T-cell (primary cell): ENCODE measurements at regions of chr16 and their contacts with region 1.

Region 1: DNA sequence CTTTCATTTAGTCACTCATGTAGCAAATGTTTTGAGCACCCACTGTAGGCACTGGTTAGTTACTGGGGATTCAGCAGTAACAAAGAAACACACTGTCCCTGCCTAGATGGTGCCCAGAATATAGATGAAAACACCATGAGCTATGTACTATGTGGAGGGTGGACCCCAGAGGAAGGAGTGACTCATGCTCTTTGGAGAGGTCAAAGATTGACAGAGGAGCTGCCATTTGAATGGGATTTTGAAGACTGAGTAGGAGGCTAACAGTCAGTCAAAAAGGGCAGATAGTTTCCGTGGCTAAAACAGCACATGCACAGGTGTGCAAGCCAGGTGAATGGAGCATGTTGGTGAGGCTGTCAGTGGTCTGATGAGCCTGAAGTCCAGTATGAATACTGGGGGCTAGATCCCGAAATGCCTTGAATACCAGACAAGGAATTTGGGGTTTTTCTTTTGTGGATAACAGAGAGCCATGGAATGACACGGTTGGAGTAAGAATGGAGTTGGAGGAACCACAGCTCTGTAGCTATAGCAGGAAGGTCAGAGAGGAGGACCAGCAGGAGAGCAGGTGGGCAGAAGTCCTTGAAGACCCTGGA is 6.1 kb downstream of the IL21R start:
- DNase-seq: peak in 2 of 35 experiments; percentile 34 to 53
- ATAC-seq: peak; percentile 36 to 57 (median 48)
- H3K4me3 ChIP-seq: peak overlapping the region in 1 of 2 donors; percentile 5
- H3K4me3 Mint-ChIP-seq: peak overlapping the region; percentile 58 to 92 (median 88)
- H3K27ac ChIP-seq: peak overlapping the region; percentile 73
- H3K27ac Mint-ChIP-seq: peak overlapping the region; percentile 87 to 93
- H3K4me1 ChIP-seq: peaks cover 27 to 60% of the 10 kb centered on the region in 2 experiments
- H3K4me1 Mint-ChIP-seq: peaks cover 88 to 93% (median 91%) of the 10 kb centered on the region in 3 donors
- H3K27me3 ChIP-seq: no peaks in the 10 kb centered on the region
- H3K27me3 Mint-ChIP-seq: no peaks in the 10 kb centered on the region

Region 2: GRCh38 chr16:27436921-27437650 is 29.0 kb after region 1 on chr16:
- CTCF ChIA-PET with region 1: no interaction called
- POLR2A ChIA-PET with region 1: interaction called in 1 of 2 experiments, 11 read pairs
- DNase-seq: peak in 2 of 35 experiments; percentile 12 to 13
- ATAC-seq: no peak
- H3K4me3 ChIP-seq: no peak overlapping the region
- H3K4me3 Mint-ChIP-seq: no peak overlapping the region
- H3K27ac ChIP-seq: no peak overlapping the region
- H3K27ac Mint-ChIP-seq: peak overlapping the region in 1 of 2 donors; percentile 86
- H3K4me1 ChIP-seq: peaks cover under 1 to 33% of the 10 kb centered on the region in 2 experiments
- H3K4me1 Mint-ChIP-seq: peaks cover 13 to 21% (median 18%) of the 10 kb centered on the region in 3 donors
- H3K27me3 ChIP-seq: no peaks in the 10 kb centered on the region
- H3K27me3 Mint-ChIP-seq: no peaks in the 10 kb centered on the region

Region 3: DNA sequence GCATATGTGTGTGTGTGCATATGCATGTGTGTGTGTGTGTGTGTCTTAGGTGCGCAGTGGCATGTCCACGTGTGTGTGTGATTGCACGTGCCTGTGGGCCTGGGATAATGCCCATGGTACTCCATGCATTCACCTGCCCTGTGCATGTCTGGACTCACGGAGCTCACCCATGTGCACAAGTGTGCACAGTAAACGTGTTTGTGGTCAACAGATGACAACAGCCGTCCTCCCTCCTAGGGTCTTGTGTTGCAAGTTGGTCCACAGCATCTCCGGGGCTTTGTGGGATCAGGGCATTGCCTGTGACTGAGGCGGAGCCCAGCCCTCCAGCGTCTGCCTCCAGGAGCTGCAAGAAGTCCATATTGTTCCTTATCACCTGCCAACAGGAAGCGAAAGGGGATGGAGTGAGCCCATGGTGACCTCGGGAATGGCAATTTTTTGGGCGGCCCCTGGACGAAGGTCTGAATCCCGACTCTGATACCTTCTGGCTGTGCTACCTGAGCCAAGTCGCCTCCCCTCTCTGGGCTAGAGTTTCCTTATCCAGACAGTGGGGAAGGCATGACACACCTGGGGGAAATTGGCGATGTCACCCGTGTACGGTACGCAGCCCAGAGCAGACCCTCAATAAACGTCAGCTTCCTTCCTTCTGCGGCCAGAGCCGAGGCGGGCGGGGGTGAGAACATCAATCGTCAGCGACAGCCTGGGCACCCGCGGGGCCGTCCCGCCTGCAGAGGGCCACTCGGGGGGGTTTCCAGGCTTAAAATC is 41.5 kb after region 1 on chr16:
- CTCF ChIA-PET with region 1: interaction called in 1 of 2 experiments, 4 read pairs
- POLR2A ChIA-PET with region 1: interaction called, 5 to 88 read pairs
- DNase-seq: peak in 34 of 35 experiments; percentile 53 to 91 (median 82)
- ATAC-seq: peak; percentile 25 to 77 (median 36)
- H3K4me3 ChIP-seq: peak overlapping the region in 1 of 2 donors; percentile 2
- H3K4me3 Mint-ChIP-seq: peak overlapping the region; percentile 41 to 67 (median 51)
- H3K27ac ChIP-seq: peak overlapping the region; percentile 92
- H3K27ac Mint-ChIP-seq: peak overlapping the region; percentile 90 to 91
- H3K4me1 ChIP-seq: peaks cover 16 to 93% of the 10 kb centered on the region in 2 experiments
- H3K4me1 Mint-ChIP-seq: peaks cover 81 to 89% (median 86%) of the 10 kb centered on the region in 3 donors
- H3K27me3 ChIP-seq: no peaks in the 10 kb centered on the region
- H3K27me3 Mint-ChIP-seq: no peaks in the 10 kb centered on the region